CD4-positive, alpha-beta memory T cell (primary cell): ENCODE measurements at regions of chr18 and their contacts with region 1.

Region 1: DNA sequence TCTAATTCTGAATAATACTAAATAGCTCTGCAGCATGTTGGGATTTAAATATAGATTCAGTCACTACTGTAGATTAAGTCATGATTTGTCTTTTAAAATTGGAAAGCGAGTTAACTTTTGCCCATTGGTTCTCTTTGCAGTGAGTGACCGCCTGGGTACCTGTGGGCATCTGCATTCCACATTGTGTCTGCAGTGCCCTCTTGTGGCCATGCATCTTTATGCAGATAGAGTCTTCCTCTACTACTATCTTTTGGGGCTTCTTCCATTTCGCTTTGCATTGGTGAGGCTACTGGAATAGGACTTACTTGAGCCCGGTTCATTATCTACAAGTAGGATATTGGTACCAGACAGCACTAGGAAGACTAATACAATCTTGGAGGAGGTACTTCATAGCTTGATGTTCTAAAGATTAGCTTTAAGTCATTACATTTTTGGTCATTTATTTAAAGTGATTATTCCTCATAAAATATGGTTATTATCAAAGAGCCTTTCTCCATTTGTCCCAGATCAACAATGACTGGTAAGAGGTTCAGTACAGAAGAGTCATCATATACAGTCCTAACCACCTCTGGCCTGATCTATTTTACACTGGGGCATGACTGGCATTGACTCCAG is 203.0 kb downstream of the SOCS6 start:
- DNase-seq: peak in 4 of 5 donors; percentile 7 to 35 (median 20)
- H3K4me3 ChIP-seq: no peak overlapping the region
- H3K4me3 Mint-ChIP-seq: no peak overlapping the region
- H3K27ac ChIP-seq: no peak overlapping the region
- H3K27ac Mint-ChIP-seq: no peak overlapping the region
- H3K4me1 ChIP-seq: no peaks in the 10 kb centered on the region
- H3K4me1 Mint-ChIP-seq: peaks cover 0 to 5% (median 0%) of the 10 kb centered on the region in 4 donors
- H3K27me3 ChIP-seq: no peaks in the 10 kb centered on the region
- H3K27me3 Mint-ChIP-seq: peaks cover 5 to 10% of the 10 kb centered on the region in 2 donors

Region 2: GRCh38 chr18:70142001-70142400 is 349.8 kb before region 1 on chr18:
- CTCF ChIA-PET with region 1: no interaction called
- POLR2A ChIA-PET with region 1: no interaction called
- intact Hi-C with region 1: no loop called
- DNase-seq: no peak
- H3K4me3 ChIP-seq: no peak overlapping the region
- H3K4me3 Mint-ChIP-seq: no peak overlapping the region
- H3K27ac ChIP-seq: no peak overlapping the region
- H3K27ac Mint-ChIP-seq: no peak overlapping the region
- H3K4me1 ChIP-seq: no peaks in the 10 kb centered on the region
- H3K4me1 Mint-ChIP-seq: peaks cover 0 to 2% (median 0%) of the 10 kb centered on the region in 4 donors
- H3K27me3 ChIP-seq: no peaks in the 10 kb centered on the region
- H3K27me3 Mint-ChIP-seq: no peaks in the 10 kb centered on the region

Region 3: GRCh38 chr18:70469916-70470315 is 21.9 kb before region 1 on chr18:
- CTCF ChIA-PET with region 1: interaction called, 10 read pairs
- POLR2A ChIA-PET with region 1: no interaction called
- intact Hi-C with region 1: no loop called
- DNase-seq: no peak
- H3K4me3 ChIP-seq: no peak overlapping the region
- H3K4me3 Mint-ChIP-seq: no peak overlapping the region
- H3K27ac ChIP-seq: no peak overlapping the region
- H3K27ac Mint-ChIP-seq: no peak overlapping the region
- H3K4me1 ChIP-seq: no peaks in the 10 kb centered on the region
- H3K4me1 Mint-ChIP-seq: no peaks in the 10 kb centered on the region
- H3K27me3 ChIP-seq: no peaks in the 10 kb centered on the region
- H3K27me3 Mint-ChIP-seq: peaks cover 2 to 4% of the 10 kb centered on the region in 2 donors

Region 4: GRCh38 chr18:70506511-70506910 is 14.7 kb after region 1 on chr18:
- CTCF ChIA-PET with region 1: interaction called, 17 read pairs
- POLR2A ChIA-PET with region 1: no interaction called
- intact Hi-C with region 1: no loop called
- DNase-seq: no peak
- H3K4me3 ChIP-seq: no peak overlapping the region
- H3K4me3 Mint-ChIP-seq: no peak overlapping the region
- H3K27ac ChIP-seq: no peak overlapping the region
- H3K27ac Mint-ChIP-seq: no peak overlapping the region
- H3K4me1 ChIP-seq: no peaks in the 10 kb centered on the region
- H3K4me1 Mint-ChIP-seq: no peaks in the 10 kb centered on the region
- H3K27me3 ChIP-seq: no peaks in the 10 kb centered on the region
- H3K27me3 Mint-ChIP-seq: peaks cover 2 to 6% of the 10 kb centered on the region in 2 donors

Region 5: GRCh38 chr18:70781860-70782453 is 290.1 kb after region 1 on chr18:
- CTCF ChIA-PET with region 1: no interaction called
- POLR2A ChIA-PET with region 1: no interaction called
- intact Hi-C with region 1: loop called (anchors 2 kb)
- DNase-seq: peak; percentile 53 to 65 (median 59)
- H3K4me3 ChIP-seq: no peak overlapping the region
- H3K4me3 Mint-ChIP-seq: no peak overlapping the region
- H3K27ac ChIP-seq: no peak overlapping the region
- H3K27ac Mint-ChIP-seq: peak overlapping the region in 2 of 7 donors; percentile 70 to 82
- H3K4me1 ChIP-seq: peaks cover 7% of the 10 kb centered on the region
- H3K4me1 Mint-ChIP-seq: peaks cover 0 to 6% (median 3%) of the 10 kb centered on the region in 4 donors
- H3K27me3 ChIP-seq: no peaks in the 10 kb centered on the region
- H3K27me3 Mint-ChIP-seq: no peaks in the 10 kb centered on the region

Region 6: DNA sequence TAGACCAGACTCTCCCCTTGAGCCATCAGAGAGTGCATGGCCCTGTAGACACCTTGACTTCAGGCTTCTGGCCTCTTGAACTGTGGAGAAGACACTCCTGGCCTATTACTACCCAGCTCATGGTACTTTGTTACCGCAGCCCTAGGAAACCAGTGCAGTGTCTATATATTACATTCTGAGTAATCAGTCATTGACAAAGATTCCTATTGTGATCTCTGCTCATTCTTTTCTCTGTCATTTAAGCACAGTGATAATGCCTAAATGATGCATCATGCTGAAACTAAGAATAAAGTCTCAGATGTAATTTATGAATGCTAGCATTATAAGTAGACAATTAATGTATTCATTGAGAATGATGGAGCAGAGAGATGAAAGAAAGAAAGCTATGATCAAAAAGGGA is 400.5 kb after region 1 on chr18:
- CTCF ChIA-PET with region 1: no interaction called
- POLR2A ChIA-PET with region 1: no interaction called
- intact Hi-C with region 1: loop called (anchors 5 kb)
- DNase-seq: no peak
- H3K4me3 ChIP-seq: no peak overlapping the region
- H3K4me3 Mint-ChIP-seq: no peak overlapping the region
- H3K27ac ChIP-seq: no peak overlapping the region
- H3K27ac Mint-ChIP-seq: no peak overlapping the region
- H3K4me1 ChIP-seq: no peaks in the 10 kb centered on the region
- H3K4me1 Mint-ChIP-seq: no peaks in the 10 kb centered on the region
- H3K27me3 ChIP-seq: no peaks in the 10 kb centered on the region
- H3K27me3 Mint-ChIP-seq: no peaks in the 10 kb centered on the region